IMR-90 (cell line): ENCODE measurements at regions of chr13 and their contacts with region 1.

Region 1: GRCh38 chr13:33542283-33543088 is 256.9 kb upstream of the STARD13 start:
- DNase-seq: peak; percentile 100
- ATAC-seq: peak; percentile 94
- H3K4me3 ChIP-seq: peak overlapping the region; percentile 54
- H3K27ac ChIP-seq: peak overlapping the region; percentile 92
- H3K4me1 ChIP-seq: peaks cover 12% of the 10 kb centered on the region
- H3K27me3 ChIP-seq: no peaks in the 10 kb centered on the region
- CTCF ChIP-seq: peak; percentile 99
- POLR2A ChIP-seq: peak; percentile 89
- RAD21 ChIP-seq: peak; percentile 99

Region 2: DNA sequence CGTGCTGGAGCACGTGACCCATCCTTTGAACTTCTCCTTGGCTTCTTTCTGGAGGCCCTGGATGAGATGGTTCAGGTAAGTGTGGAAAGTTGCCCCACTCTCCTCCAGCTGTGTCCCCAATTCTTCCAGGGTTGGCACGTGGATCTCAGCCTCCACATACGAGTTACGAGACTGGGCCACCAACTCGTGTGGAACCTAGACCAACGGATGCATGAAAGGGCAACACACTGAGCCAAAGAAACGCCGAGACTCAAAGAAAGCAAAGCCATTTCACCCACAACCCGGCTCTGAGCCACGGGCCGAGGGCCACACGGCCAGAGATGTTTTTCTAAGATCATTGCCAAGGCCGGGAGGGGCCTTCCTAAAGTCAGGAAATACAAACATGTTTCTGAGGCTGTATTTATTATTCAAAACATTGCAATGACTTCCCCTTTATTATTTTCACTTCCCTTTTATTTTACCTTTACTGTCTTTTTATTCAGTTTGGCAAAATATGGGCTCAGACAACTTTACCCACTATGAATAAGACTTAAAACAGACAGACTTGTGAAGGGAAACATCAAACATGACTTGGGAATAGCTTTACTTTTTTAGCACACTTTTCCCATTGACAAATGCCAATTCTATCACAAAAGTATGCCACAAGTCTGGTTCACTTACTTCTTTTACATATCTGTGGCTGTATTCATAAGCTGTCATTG is 431.6 kb before region 1 on chr13:
- CTCF ChIA-PET with region 1: interaction called, 4 read pairs
- POLR2A ChIA-PET with region 1: no interaction called
- dilution Hi-C with region 1: no loop called
- in situ Hi-C with region 1: no loop called
- intact Hi-C with region 1: loop called (anchors 5 kb)
- DNase-seq: peak; percentile 56
- ATAC-seq: no peak
- H3K4me3 ChIP-seq: no peak overlapping the region
- H3K27ac ChIP-seq: peak overlapping the region; percentile 59; the same call in 1 of the 2 replicates
- H3K4me1 ChIP-seq: peaks cover 55% of the 10 kb centered on the region
- H3K27me3 ChIP-seq: no peaks in the 10 kb centered on the region
- CTCF ChIP-seq: no peak
- POLR2A ChIP-seq: no peak
- RAD21 ChIP-seq: no peak

Region 3: DNA sequence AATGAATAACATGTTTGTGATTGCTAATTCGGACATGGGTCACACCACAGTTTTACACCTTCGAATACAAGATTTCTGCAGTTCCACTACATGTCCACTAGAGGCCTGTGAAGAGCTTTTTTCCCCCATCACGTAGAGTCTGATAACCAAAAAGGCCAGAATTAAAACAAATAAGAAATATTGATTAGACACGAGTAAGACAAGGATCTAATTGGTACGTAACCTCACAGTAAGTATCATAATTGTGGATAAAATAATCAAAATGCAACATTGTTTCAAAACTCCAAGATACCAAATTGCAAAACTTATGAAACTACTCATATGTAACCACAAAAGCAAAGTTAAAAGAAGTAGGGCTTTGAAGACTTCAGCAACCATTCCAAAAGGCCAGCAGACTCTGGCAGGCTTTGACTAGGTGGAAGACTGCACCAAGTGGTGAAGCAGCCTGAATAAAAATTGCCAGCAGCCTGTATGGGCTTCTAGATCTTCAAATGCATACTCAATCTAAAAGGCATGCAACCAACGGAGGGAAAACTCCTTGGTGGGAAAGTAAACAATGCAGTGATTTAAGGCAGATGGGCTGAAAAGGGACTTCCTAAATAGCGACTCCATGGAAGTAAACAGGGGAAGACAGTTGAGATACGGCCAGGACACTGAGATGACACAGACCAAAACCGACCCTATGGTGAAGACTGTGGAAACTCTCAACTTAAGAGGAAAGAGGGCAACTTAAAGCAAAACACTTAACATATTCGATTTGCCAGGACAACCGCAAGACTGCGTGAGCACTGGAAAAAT is 313.6 kb before region 1 on chr13:
- CTCF ChIA-PET with region 1: interaction called, 3 read pairs
- POLR2A ChIA-PET with region 1: no interaction called
- dilution Hi-C with region 1: no loop called
- in situ Hi-C with region 1: no loop called
- intact Hi-C with region 1: loop called (anchors 1 kb)
- DNase-seq: peak; percentile 83
- ATAC-seq: peak; percentile 46
- H3K4me3 ChIP-seq: peak overlapping the region; percentile 2; the same call in 1 of the 2 replicates
- H3K27ac ChIP-seq: peak overlapping the region; percentile 97
- H3K4me1 ChIP-seq: peaks cover 29% of the 10 kb centered on the region
- H3K27me3 ChIP-seq: no peaks in the 10 kb centered on the region
- CTCF ChIP-seq: peak; percentile 82
- POLR2A ChIP-seq: 0 out of 2 replicates have a peak, but pooled peaks have one; percentile 27
- RAD21 ChIP-seq: peak; percentile 83

Region 4: DNA sequence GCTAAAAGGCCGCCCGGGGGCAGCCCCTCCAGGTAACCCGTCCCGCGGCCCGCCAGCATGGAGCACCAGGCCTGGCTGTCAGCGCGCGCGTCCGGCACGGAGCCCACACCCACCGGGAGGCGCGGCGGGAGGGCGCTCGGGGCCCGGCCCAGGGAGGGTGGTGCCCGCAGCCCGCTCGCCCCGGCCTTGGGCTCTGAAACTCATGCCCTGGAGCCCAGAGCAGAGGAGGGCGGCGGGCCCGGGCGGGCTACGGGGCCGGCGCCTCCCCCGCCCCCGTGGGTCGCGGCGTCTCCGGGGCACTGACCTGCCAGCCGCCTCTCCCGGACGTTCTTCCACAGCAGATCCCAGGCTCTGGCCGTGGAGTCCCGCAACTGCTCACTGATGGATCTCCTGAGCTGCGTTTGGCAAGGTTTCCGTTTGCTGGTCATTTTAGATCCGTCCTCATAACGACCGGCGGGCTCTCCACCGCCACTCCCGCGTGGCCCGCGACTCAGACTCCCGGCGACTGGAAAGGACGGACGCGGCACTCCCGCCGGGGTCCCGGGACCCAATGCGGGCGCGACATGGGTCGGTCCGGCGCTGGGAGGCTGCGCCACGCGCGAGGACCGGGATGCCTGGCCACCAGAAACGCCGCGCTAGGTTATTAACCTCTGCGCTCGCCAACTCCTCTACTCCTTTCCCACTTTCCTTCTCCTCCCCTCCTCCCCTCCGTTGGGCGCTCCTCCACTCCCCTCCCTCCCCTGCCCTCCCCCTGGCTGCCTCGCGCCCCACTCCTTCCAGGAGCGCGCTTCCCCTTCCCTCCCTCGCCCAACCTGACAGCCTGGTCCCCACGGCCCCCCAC is 192.3 kb before region 1 on chr13:
- CTCF ChIA-PET with region 1: no interaction called
- POLR2A ChIA-PET with region 1: no interaction called
- dilution Hi-C with region 1: no loop called
- in situ Hi-C with region 1: loop called (anchors 10 kb)
- intact Hi-C with region 1: loop called (anchors 1 kb)
- DNase-seq: peak; percentile 39
- ATAC-seq: peak; percentile 70
- H3K4me3 ChIP-seq: peak overlapping the region; percentile 97
- H3K27ac ChIP-seq: peak overlapping the region; percentile 95
- H3K4me1 ChIP-seq: peaks cover 12% of the 10 kb centered on the region
- H3K27me3 ChIP-seq: no peaks in the 10 kb centered on the region
- CTCF ChIP-seq: no peak
- POLR2A ChIP-seq: no peak; the same call in 1 of the 2 replicates
- RAD21 ChIP-seq: no peak

Region 5: GRCh38 chr13:34577051-34577450 is 1034.6 kb after region 1 on chr13:
- CTCF ChIA-PET with region 1: no interaction called
- POLR2A ChIA-PET with region 1: no interaction called
- dilution Hi-C with region 1: no loop called
- in situ Hi-C with region 1: no loop called
- intact Hi-C with region 1: no loop called
- DNase-seq: no peak
- ATAC-seq: no peak
- H3K4me3 ChIP-seq: no peak overlapping the region
- H3K27ac ChIP-seq: no peak overlapping the region
- H3K4me1 ChIP-seq: no peaks in the 10 kb centered on the region
- H3K27me3 ChIP-seq: no peaks in the 10 kb centered on the region
- CTCF ChIP-seq: no peak
- POLR2A ChIP-seq: no peak
- RAD21 ChIP-seq: no peak

Region 6: GRCh38 chr13:35139591-35139990 is 1597.1 kb after region 1 on chr13:
- CTCF ChIA-PET with region 1: no interaction called
- POLR2A ChIA-PET with region 1: no interaction called
- dilution Hi-C with region 1: no loop called
- in situ Hi-C with region 1: no loop called
- intact Hi-C with region 1: no loop called
- DNase-seq: peak; percentile 31
- ATAC-seq: no peak
- H3K4me3 ChIP-seq: no peak overlapping the region
- H3K27ac ChIP-seq: no peak overlapping the region
- H3K4me1 ChIP-seq: no peaks in the 10 kb centered on the region
- H3K27me3 ChIP-seq: no peaks in the 10 kb centered on the region
- CTCF ChIP-seq: no peak
- POLR2A ChIP-seq: no peak
- RAD21 ChIP-seq: no peak